Activated CD4-positive, alpha-beta T cell treated with anti-CD3 and anti-CD28 coated beads for 36 hours (primary cell): ENCODE measurements at regions of chr16 and their contacts with region 1.

Region 1: DNA sequence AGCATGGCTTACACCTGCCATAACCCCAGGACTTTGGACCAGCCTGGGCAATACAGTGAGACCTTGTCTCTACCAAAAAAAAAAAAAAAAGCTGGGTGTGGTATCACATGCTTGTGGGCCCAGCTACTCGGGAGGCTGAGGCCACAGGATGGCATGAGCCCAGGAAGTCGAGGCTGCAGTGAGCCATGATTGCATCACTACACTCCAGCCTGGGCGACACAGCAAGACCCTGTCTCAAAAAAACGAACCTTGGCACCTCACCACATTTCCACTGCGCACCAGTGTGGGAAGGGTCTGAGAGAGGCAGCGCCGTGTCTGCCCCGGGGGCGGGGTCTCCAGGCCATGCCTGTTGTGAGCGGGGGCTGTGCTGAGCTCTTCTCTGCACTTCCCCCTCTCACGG is 6.3 kb downstream of the ACSF3 start:
- DNase-seq: peak; percentile 63
- ATAC-seq: no peak
- H3K4me3 Mint-ChIP-seq: peak overlapping the region; percentile 36
- H3K27ac Mint-ChIP-seq: peak overlapping the region; percentile 85
- H3K4me1 Mint-ChIP-seq: peaks cover 76% of the 10 kb centered on the region
- H3K27me3 Mint-ChIP-seq: no peaks in the 10 kb centered on the region

Region 2: DNA sequence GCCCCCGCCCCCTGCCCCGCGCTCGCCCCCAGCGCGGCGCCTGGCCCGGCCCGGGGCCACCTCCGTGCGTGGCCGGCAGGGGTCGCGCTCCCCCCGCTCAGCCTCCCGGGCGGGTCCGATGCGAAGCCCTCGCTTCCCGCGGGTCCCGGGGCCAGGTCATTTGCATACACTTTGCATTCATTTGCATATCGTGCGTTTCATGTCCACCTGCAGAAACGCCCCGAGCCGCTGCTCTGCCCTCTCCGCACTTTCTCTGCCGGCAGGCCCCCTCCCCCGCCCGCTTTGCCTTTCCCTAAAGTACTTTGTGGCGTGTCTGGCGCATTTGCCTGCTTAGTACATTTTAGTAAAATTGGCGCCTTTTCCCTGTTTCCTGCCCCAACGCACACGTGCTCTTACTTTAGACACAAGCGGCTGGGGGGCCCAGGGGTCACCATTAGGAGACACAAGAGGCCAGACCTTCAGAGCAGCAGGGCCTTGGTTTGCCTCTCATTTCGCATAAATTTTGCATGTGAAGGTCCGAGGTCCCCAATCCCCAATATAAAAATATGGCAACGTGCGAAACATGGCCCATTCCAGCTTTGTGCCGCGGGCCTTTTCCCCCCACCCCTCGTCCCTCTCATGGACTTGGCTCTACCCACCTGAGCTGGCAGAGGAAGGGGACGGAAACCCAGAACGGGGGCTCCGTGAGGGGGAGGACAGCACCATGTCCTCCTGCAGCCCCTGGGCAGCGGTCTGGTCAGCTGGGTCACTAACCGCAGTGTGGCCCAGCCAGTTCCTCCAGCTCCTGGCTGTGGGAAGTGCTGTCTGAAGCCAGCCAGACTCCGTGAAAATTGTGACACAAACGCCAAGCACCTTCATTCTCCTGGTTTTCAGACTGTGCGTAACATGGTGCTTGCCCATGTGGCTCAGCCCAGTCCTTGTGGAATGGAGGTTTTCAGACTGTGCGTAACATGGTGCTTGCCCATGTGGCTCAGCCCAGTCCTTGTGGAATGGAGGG is 157.7 kb before region 1 on chr16:
- CTCF ChIA-PET with region 1: no interaction called
- POLR2A ChIA-PET with region 1: no interaction called
- intact Hi-C with region 1: loop called (anchors 5 kb)
- DNase-seq: peak; percentile 79
- ATAC-seq: peak; percentile 86
- H3K4me3 Mint-ChIP-seq: no peak overlapping the region
- H3K27ac Mint-ChIP-seq: no peak overlapping the region
- H3K4me1 Mint-ChIP-seq: no peaks in the 10 kb centered on the region
- H3K27me3 Mint-ChIP-seq: peaks cover 18% of the 10 kb centered on the region

Region 3: DNA sequence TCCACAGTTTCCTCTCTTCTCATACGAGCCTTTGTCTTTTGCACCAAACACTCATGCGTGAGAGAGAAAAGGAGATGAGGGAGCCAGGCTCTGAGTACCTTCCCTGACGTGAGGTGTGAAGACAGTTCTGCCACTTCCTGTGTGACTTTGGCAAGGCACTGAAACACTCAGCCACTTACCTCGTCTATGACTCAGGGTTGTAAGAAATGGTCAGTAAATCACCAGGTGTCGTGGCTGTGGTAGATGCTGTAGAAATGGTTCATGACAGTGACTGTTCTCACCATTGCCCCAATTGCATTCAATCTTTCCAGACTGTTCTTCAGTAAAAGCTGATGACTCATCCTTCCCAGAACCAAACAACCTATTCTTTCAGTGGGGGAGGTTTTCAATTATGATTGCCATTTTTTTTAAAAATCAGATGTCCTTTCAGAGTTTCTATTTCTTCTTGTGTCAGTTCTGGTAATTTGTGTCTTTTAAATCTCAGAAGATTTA is 73.7 kb before region 1 on chr16:
- CTCF ChIA-PET with region 1: no interaction called
- POLR2A ChIA-PET with region 1: no interaction called
- intact Hi-C with region 1: loop called (anchors 1 to 2 kb)
- DNase-seq: peak; percentile 82
- ATAC-seq: peak; percentile 99
- H3K4me3 Mint-ChIP-seq: no peak overlapping the region
- H3K27ac Mint-ChIP-seq: peak overlapping the region; percentile 90
- H3K4me1 Mint-ChIP-seq: peaks cover 24% of the 10 kb centered on the region
- H3K27me3 Mint-ChIP-seq: peaks cover 3% of the 10 kb centered on the region

Region 4: DNA sequence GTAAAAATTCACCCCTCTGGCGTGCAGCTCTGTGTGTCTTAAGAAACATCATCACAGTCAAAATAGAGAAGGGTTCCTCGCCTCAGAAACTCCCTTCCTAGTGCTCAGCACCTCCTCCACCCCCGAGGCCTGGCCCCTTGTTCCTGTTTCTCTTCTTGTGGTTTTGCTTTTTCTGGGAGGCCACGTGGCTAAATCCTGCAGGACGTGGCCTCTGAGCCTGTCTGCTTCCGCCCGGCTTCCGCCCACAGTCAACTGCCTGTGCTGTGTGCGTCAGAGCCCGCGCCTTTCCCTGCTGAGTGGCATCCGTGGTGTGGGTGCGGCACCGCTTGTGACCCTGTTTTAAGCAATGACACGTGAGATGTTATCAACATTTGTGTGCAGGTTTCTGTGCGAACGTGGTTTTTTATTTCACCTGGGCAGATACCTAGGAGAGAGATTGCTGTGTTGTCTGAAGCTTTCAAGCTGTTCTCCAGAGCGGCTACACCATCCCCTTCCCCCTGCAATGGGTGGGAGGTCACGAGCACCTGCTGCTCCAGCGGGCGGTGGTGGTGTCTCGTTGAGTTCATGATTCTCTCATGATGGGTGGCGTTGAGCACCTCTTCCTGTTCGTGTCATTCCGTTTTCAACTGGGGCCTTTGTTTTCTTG is 15.4 kb after region 1 on chr16:
- CTCF ChIA-PET with region 1: interaction called, 3 read pairs
- POLR2A ChIA-PET with region 1: interaction called, 6 read pairs
- intact Hi-C with region 1: loop called (anchors 1 kb)
- DNase-seq: peak; percentile 90
- ATAC-seq: peak; percentile 86
- H3K4me3 Mint-ChIP-seq: peak overlapping the region; percentile 74
- H3K27ac Mint-ChIP-seq: peak overlapping the region; percentile 89
- H3K4me1 Mint-ChIP-seq: peaks cover 58% of the 10 kb centered on the region
- H3K27me3 Mint-ChIP-seq: no peaks in the 10 kb centered on the region

Region 5: DNA sequence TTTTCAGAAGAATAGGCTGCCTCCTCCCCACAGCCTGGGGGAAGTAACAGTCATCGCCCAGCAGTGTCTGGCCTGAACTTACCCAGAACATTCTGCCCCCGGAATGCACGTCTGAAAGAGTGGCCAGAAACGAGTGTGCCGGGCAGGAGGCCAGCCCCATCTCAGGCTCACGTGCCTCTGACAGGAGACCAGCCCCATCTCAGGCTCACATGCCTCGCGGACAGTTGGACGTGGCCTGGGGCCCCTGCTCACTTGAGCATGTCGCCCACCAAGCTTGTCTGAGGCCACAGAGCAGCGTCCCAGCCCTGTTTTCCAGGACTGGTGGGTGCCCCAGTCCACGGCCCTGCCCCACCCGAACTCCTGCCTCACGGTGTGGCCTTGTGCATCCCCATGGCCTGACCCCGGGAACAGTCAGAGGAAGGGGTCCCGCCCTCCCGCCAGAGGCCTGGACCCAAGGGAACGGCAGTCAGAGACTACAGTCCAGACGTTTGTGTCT is 55.3 kb after region 1 on chr16:
- CTCF ChIA-PET with region 1: no interaction called
- POLR2A ChIA-PET with region 1: no interaction called
- intact Hi-C with region 1: loop called in 1 of 2 experiments (anchors 5 kb)
- DNase-seq: no peak
- ATAC-seq: no peak
- H3K4me3 Mint-ChIP-seq: no peak overlapping the region
- H3K27ac Mint-ChIP-seq: no peak overlapping the region
- H3K4me1 Mint-ChIP-seq: no peaks in the 10 kb centered on the region
- H3K27me3 Mint-ChIP-seq: no peaks in the 10 kb centered on the region